Mucosa of descending colon (tissue), 3 donors: ENCODE measurements at regions of chr3 and their contacts with region 1.

Region 1: GRCh38 chr3:188154014-188154808 is at the start of gene LPP:
- DNase-seq: peak; percentile 78 to 90 (median 89)
- ATAC-seq: peak; percentile 81
- H3K4me3 ChIP-seq: peak within 1 kb of the TSS; percentile 74
- H3K4me1 ChIP-seq: peaks cover 38% of the 10 kb centered on the region
- CTCF ChIP-seq: no peak
- total RNA-seq, gene LPP: 262 to 816 (median 325) TPM

Region 2: GRCh38 chr3:188212308-188212969 is 58.2 kb after region 1 on chr3:
- intact Hi-C with region 1: loop called in 1 of 2 experiments (anchors 10 kb)
- DNase-seq: peak in 1 of 3 donors; percentile 55
- ATAC-seq: peak; percentile 78
- H3K4me3 ChIP-seq: no peak overlapping the region
- H3K4me1 ChIP-seq: peaks cover 29% of the 10 kb centered on the region
- CTCF ChIP-seq: no peak

Region 3: GRCh38 chr3:188257384-188258026 is 103.3 kb after region 1 on chr3:
- intact Hi-C with region 1: no loop called
- DNase-seq: no peak
- ATAC-seq: peak; percentile 61
- H3K4me3 ChIP-seq: no peak overlapping the region
- H3K4me1 ChIP-seq: peaks cover 38% of the 10 kb centered on the region
- CTCF ChIP-seq: no peak